Left ventricle myocardium superior (tissue), 1 donor: ENCODE measurements at regions of chr1 and their contacts with region 1.

Region 1: DNA sequence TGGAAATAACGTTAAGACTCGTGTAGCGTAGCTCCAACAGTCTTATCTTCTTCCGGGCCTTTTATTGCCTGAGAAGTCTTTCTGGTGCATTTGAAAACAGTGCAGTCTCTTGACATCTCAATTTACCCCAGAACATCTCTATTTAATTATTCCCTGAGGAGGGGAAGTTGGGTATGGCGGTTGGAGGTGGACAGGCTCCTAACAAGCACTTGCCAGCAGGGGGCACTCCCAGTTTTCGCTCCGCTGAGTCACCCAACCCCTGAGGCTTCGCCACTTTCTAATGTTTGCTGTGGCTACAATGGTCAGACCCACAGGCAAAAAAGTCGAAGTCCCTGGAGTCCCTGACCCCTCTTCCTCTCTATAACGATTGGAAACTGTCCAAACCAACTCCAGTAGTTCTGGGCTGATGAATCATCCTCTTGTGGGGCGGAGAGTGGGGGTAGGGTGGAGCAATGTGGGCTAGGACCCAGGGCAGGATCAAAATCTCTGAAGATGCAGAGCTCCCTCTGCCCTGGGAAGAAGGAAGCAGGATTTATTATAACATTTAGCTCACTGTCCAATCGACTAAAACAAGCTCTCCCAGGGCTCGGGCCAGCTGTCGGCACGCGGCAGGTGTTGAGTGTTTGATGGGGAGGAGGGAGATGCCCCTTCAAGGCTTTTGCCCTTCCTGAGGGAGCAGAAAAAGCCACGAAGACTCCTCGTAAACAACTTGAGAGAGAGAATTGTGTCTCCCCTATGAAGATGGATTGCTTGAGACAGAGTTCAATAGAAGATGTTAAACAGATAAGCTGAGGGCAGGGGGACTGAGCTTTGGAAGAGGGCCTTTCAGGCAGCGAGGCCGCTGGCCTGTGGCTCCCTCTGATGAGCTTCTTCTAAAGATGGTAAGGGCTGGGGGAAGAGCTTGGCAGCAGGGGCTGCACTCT is 85.7 kb downstream of the BRINP2 start:
- DNase-seq: peak; percentile 72
- ATAC-seq: peak; percentile 91

Region 2: GRCh38 chr1:176926330-176927086 is 329.9 kb before region 1 on chr1:
- intact Hi-C with region 1: no loop called
- DNase-seq: no peak
- ATAC-seq: no peak

Region 3: DNA sequence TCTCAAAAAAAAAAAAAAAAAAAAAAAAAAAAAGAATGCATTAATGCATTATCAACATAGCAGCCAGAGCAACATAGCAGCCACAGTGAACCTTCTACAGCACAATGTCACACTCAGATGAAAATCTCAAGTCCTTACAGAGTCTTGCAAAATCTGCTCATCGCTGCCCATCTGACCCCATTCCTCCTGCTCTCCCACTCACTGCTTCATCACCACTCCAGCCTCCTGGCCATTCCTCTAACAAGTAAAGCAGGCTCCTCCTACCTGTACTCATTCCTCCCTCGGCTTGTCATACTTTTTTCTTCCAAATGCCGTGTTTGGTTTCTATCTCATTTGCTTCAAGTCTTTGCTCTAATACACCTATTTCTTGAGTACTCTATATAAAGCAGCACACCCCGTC is 56.1 kb before region 1 on chr1:
- intact Hi-C with region 1: no loop called
- DNase-seq: no peak
- ATAC-seq: no peak

Region 4: DNA sequence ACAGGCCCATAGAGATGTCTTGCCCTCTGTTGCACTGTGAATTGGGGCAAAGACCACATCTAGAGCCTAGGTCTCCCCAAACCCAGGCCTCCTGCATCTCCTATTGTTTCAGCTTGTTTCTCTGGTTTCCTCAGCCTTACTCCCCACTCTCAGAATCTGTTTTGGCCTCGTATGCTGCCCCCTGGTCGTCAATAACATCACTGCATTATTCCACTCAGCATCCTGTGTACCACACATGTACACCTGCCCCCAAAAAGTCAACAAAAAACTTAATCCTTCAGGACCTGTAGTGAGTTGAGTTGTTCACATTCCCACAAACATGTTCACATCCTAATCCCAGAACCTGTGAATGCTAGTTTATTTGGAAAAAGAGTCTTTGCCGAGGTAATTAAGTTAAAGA is 99.2 kb after region 1 on chr1:
- intact Hi-C with region 1: loop called (anchors 10 kb)
- DNase-seq: no peak
- ATAC-seq: peak; percentile 53